HEK293 (cell line): ENCODE measurements at regions of chr3 and their contacts with region 1.

Region 1: DNA sequence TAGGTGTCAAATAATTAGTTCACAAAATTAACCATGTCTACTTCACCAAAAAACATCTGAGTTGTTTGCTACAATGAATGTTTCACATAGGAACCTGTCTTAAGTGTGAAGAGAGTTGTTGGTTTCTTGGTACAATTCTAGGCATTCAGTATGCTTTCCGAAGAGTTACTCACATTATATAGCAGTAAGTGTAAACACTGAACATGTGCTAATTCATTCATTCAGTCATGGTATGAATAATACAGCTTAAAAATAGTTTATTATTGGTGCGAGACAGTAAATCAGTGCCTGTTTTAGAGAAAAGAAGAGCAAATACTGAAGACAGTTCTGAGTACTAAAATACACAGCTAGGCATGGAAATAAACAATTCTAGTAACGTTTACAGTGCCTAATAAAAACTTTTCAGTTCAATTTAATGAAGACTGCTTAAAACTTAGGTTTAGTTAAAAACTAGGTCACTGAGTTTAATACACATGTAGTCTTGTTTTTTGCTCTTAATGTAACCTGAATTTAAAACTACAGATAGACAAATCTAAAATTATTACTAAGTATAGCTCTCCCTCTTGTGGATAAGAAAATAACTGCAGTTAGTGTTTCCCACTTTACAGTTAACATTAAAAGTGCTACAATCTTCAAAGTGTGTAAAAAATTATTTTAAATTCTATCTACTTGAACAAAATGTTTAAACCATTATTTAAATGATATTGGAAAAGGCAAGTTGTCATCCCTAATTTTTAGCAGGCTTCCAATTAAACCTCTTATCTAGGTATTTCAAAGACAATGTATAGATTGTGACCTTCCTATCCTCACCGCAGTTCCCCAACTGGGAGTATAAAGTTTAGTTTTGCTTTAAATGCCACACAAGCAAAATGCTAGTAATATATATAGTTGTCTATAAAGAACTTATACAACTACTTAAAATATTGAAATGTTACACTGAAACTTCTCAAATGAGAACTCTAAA is 20.1 kb upstream of the ZCWPW2 start:
- H3K4me3 ChIP-seq: no peak overlapping the region
- H3K27ac ChIP-seq: no peak overlapping the region
- H3K4me1 ChIP-seq: no peaks in the 10 kb centered on the region
- CTCF ChIP-seq: no peak

Region 2: DNA sequence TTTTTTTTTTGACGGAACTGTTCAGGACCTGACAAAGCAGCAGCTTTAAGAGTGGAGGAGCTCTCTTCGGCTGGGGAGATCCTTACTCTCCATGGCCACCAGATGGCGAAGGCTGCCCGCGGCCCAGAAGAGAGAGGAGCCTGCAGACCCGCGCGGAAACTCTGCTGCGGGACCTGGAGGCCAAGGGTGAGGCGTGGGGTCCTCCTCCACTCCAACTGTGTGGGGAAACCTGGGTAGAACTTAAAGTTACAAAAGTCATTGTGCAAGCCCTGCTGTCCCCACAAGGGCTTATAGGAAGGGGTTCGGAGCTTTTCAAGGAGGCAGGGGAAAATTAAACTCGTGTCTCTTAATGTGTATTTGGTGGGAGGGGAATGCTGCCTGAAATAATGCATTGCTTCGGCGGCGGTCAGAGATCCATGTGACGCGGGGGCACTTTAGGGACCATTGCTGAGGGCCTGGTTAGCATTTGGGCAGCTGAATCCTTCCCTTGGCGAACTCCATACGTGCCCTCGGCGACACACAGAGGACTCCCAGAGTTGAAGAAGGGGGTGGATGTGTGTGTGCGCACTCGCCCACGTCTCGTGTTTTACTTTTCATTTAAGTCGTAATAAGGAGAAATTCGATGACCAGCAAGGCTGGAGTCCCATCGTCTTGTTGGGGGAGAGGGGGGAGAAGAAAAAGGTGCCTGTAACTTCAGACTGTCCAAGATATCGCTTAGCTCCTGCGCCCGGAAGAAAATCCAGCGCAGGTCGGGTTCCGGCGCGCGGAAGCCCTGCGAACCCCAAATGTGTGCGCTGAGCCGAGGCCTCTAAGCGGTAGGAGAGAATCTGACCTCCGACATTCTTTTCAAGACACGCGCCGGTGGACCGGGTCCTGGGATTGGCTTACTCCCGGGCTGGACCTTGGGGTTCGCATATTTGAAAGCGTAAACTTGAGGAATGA is 616.1 kb before region 1 on chr3:
- CTCF ChIA-PET with region 1: interaction called, 10 read pairs
- POLR2A ChIA-PET with region 1: no interaction called
- H3K4me3 ChIP-seq: peak overlapping the region; percentile 35
- H3K27ac ChIP-seq: no peak overlapping the region
- H3K4me1 ChIP-seq: no peaks in the 10 kb centered on the region
- CTCF ChIP-seq: no peak; the same call in 1 of the 2 replicates

Region 3: DNA sequence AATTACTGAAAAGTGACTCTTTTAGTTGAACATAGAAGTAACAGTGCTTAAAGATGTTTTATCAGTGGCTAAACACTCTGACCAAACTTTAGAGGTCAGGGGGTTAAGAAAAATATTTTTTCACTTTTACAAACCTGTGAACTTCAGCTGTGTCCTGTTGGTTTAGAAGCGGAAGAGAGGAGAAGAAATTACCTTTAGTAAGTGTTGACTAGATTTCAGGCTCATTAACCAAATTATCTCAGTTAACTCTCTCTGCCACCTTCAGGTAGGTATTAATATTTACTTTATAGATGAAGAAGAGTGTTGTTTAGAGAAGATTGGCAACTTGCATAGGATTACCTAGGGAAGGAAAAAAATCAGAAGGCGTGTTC is 239.0 kb before region 1 on chr3:
- CTCF ChIA-PET with region 1: no interaction called
- POLR2A ChIA-PET with region 1: no interaction called
- H3K4me3 ChIP-seq: no peak overlapping the region
- H3K27ac ChIP-seq: no peak overlapping the region
- H3K4me1 ChIP-seq: no peaks in the 10 kb centered on the region
- CTCF ChIP-seq: no peak

Region 4: DNA sequence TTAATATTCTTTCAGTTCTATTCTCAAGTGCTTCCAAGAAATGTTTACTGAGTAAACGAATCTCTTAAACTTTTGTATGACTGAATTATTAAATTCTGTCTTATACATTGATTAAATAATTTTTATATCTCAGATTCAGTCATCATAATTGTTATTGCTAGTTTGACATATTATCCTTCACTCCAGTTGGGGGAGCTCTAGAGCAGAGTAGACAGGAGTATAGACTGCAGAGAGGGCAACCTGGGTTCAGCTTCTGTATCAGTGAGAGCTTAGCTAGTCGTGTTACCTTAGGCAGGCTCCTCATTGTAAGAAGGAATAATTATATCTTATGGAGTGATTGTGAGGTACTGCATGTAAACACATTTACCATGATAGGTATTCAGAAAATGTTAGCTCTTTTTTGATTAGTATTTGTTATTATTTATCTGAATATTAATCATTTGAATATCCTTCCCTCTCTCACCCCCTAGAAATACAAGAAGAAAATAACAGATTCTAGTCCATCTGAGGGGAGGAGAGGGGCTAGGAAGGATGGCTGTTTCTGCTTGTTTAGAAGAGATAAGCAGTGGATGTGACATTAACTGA is 10.9 kb before region 1 on chr3:
- CTCF ChIA-PET with region 1: interaction called, 16 read pairs
- POLR2A ChIA-PET with region 1: no interaction called
- H3K4me3 ChIP-seq: no peak overlapping the region
- H3K27ac ChIP-seq: no peak overlapping the region
- H3K4me1 ChIP-seq: no peaks in the 10 kb centered on the region
- CTCF ChIP-seq: no peak